ENCODE measurements at regions of chr2 and their contacts with region 1.

Region 1: DNA sequence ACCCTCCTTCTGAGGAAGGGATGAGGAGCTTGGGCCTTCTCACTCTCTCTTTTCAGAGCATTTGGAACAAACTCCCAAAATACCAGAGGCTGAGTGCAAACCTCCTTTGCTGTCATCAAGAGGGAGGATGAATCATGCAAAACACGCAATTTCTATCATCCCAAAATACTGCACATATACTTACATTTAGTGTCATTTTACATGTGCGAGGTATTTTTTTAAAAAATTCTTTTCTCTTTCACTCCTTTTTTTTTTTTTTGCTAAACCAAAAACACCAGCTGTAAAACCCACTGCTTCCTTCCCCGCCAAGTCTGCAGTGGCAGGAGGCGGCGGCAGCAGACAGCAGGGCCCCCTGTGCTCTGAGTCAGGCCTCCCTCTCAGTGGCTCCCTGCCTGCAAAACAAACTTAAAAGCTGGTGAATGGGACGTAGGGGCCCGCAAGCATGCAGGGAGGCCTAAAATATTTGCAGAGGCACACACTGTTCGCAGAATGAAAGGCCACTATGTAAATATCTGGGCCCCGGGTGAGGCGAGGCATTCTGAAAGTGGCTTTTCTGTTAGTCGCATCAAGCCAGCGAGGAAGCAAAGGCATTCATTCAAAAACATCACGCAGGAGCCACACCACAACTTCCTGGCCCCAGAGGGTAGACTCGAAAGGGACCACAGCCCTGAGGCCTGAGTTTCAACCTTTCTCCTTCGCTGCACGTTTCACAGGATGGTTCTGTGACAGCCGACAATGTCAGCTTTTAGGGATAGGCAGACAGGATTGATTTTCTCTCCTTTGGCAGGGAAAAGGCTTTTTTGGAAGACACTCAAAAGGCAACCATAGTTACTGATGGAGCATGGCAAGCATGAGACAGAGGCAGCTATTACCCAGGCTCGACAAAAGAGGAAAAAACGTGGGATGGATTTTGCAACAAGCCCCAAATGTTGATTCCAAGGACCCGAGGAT is 73.4 kb downstream of the ACTR2 start:
- DNase-seq: peak; percentile 32 to 87 (median 74)
- ATAC-seq: peak; percentile 93
- H3K4me3 ChIP-seq: peak overlapping the region; percentile 27 to 37
- H3K4me3 Mint-ChIP-seq: peak overlapping the region; percentile 75
- H3K27ac ChIP-seq: peak overlapping the region; percentile 3 to 54
- H3K27ac Mint-ChIP-seq: peak overlapping the region; percentile 94
- H3K4me1 ChIP-seq: peaks cover 34% of the 10 kb centered on the region
- H3K4me1 Mint-ChIP-seq: peaks cover 35% of the 10 kb centered on the region
- H3K27me3 ChIP-seq: peaks cover 0 to 6% of the 10 kb centered on the region in 2 experiments
- H3K27me3 Mint-ChIP-seq: peaks cover 3% of the 10 kb centered on the region
- CTCF ChIP-seq: no peak

Region 2: DNA sequence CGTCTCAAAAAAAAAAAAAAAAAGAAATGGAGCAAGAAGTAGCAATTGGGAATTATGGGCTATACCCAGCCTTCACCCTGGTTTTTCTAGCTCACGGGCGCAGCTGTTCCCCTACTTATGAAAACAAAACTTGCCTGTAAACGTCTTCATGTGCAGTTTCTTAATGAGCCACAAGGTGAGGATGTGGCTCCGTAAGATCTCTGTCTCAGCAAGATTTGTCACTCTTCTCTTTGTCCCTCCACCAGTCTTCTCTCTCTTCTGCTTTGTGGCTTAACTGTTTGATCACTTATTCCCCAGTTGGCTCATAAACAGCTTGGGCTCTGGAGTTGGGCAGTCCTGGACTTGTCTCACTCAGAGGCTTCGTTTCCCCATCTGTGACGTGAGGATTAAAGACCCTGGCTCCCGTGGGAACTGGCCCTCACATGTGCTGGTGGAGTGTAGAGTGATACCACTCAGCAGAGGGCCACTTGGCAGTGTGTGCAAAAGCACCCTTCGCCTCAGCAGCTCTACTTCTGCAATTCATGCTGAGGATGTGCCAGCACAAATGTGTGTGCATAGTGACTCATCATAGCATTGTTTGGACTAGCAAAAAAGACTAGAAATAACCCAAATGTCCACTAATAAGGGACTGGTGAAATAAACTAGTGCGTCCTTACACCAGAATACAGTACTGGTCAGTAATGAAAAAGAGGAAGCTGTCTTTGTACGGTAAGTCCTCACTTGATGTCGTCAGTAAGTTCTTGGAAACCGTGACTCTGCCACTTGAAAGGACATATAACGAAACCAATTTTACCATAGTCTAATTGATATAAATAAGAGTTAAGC is 236.1 kb before region 1 on chr2:
- CTCF ChIA-PET with region 1: no interaction called
- POLR2A ChIA-PET with region 1: no interaction called
- intact Hi-C with region 1: loop called in 1 of 2 experiments (anchors 5 kb)
- DNase-seq: peak in 7 of 9 experiments; percentile 15 to 81 (median 43)
- ATAC-seq: peak; percentile 96
- H3K4me3 ChIP-seq: no peak overlapping the region
- H3K4me3 Mint-ChIP-seq: no peak overlapping the region
- H3K27ac ChIP-seq: no peak overlapping the region
- H3K27ac Mint-ChIP-seq: peak overlapping the region; percentile 41
- H3K4me1 ChIP-seq: peaks cover 42% of the 10 kb centered on the region
- H3K4me1 Mint-ChIP-seq: peaks cover 50% of the 10 kb centered on the region
- H3K27me3 ChIP-seq: no peaks in the 10 kb centered on the region
- H3K27me3 Mint-ChIP-seq: no peaks in the 10 kb centered on the region
- CTCF ChIP-seq: peak; percentile 78

Region 3: GRCh38 chr2:65227425-65228262 is 73.4 kb before region 1 on chr2 and contains the start of gene ACTR2:
- CTCF ChIA-PET with region 1: no interaction called
- POLR2A ChIA-PET with region 1: interaction called, 10 read pairs
- intact Hi-C with region 1: loop called (anchors 1 to 5 kb)
- DNase-seq: peak; percentile 87 to 98 (median 94)
- ATAC-seq: peak; percentile 94
- H3K4me3 ChIP-seq: peak within 1 kb of the TSS; percentile 74 to 89
- H3K4me3 Mint-ChIP-seq: peak within 1 kb of the TSS; percentile 99
- H3K27ac ChIP-seq: peak within 1 kb of the TSS; percentile 94 to 98
- H3K27ac Mint-ChIP-seq: peak within 1 kb of the TSS; percentile 99
- H3K4me1 ChIP-seq: peaks cover 43% of the 10 kb centered on the region
- H3K4me1 Mint-ChIP-seq: peaks cover 47% of the 10 kb centered on the region
- H3K27me3 ChIP-seq: no peaks in the 10 kb centered on the region
- H3K27me3 Mint-ChIP-seq: no peaks in the 10 kb centered on the region
- CTCF ChIP-seq: no peak
- total RNA-seq, gene ACTR2: 101 to 117 TPM

Region 4: GRCh38 chr2:65264821-65265670 is 36.0 kb before region 1 on chr2:
- CTCF ChIA-PET with region 1: interaction called, 16 read pairs
- POLR2A ChIA-PET with region 1: no interaction called
- intact Hi-C with region 1: loop called in 1 of 2 experiments (anchors 5 kb)
- DNase-seq: peak in 2 of 9 experiments; percentile 55 to 68
- ATAC-seq: no peak
- H3K4me3 ChIP-seq: no peak overlapping the region
- H3K4me3 Mint-ChIP-seq: no peak overlapping the region
- H3K27ac ChIP-seq: no peak overlapping the region
- H3K27ac Mint-ChIP-seq: peak overlapping the region; percentile 66
- H3K4me1 ChIP-seq: no peaks in the 10 kb centered on the region
- H3K4me1 Mint-ChIP-seq: peaks cover 11% of the 10 kb centered on the region
- H3K27me3 ChIP-seq: no peaks in the 10 kb centered on the region
- H3K27me3 Mint-ChIP-seq: no peaks in the 10 kb centered on the region
- CTCF ChIP-seq: peak; percentile 75

Region 5: DNA sequence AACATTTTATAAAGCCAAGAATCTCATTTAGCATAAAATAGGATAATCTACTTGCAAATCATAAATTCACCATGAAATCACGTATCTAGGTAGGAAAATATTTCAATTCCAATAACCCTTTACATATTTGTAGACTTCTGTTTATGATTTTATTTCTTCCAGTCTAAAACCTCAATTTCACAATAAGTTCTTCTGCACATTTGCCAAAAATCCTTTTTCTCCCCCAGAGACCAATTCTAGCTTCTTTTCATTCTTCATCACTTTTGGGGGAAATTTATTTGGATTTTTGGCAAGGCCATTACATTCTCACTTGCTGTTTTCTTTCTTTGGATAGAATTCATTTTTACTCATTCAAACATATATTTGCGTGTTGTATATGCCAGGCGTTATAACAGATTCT is 44.6 kb after region 1 on chr2:
- CTCF ChIA-PET with region 1: no interaction called
- POLR2A ChIA-PET with region 1: no interaction called
- intact Hi-C with region 1: loop called in 1 of 2 experiments (anchors 2 kb)
- DNase-seq: no peak
- ATAC-seq: no peak
- H3K4me3 ChIP-seq: no peak overlapping the region
- H3K4me3 Mint-ChIP-seq: no peak overlapping the region
- H3K27ac ChIP-seq: no peak overlapping the region
- H3K27ac Mint-ChIP-seq: no peak overlapping the region
- H3K4me1 ChIP-seq: no peaks in the 10 kb centered on the region
- H3K4me1 Mint-ChIP-seq: peaks cover under 1% of the 10 kb centered on the region
- H3K27me3 ChIP-seq: no peaks in the 10 kb centered on the region
- H3K27me3 Mint-ChIP-seq: peaks cover 11% of the 10 kb centered on the region
- CTCF ChIP-seq: no peak

Region 6: DNA sequence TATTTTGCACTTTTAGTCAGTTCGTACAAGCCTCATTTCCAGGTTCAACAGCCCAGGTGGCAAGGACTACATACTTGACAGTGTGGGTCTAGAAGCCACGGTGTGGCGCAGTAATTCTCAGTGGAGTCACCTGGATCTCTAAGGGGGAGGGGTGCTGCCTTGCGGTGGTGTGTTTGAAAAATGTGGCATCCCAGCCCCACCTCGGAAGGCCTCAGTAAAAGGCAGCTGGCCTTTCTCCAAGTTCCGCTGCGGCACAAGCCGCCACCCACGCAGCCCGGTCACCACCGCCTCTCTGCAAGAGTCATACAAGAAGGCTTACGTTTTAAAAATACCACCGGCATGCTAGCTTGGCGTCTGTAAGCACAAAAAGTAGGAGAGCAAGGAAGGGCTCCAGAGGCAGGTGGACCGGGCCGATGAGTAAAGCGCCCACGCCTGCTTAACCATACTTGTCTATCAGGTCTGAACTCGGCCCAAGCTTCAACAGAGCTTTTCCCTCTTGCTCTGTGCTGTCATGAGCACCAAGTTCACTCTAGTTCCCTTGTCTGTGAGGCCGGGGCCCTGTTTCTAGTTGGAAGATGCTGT is 81.8 kb after region 1 on chr2:
- CTCF ChIA-PET with region 1: no interaction called
- POLR2A ChIA-PET with region 1: no interaction called
- intact Hi-C with region 1: no loop called
- DNase-seq: peak; percentile 43 to 86 (median 77)
- ATAC-seq: peak; percentile 95
- H3K4me3 ChIP-seq: no peak overlapping the region
- H3K4me3 Mint-ChIP-seq: peak overlapping the region; percentile 61
- H3K27ac ChIP-seq: no peak overlapping the region
- H3K27ac Mint-ChIP-seq: peak overlapping the region; percentile 67
- H3K4me1 ChIP-seq: peaks cover 21% of the 10 kb centered on the region
- H3K4me1 Mint-ChIP-seq: peaks cover 29% of the 10 kb centered on the region
- H3K27me3 ChIP-seq: no peaks in the 10 kb centered on the region
- H3K27me3 Mint-ChIP-seq: peaks cover 15% of the 10 kb centered on the region
- CTCF ChIP-seq: peak; percentile 21

Measured in CD8-positive, alpha-beta T cell (primary cell).